ENCODE measurements at regions of chr9 and their contacts with region 1.

Region 1: DNA sequence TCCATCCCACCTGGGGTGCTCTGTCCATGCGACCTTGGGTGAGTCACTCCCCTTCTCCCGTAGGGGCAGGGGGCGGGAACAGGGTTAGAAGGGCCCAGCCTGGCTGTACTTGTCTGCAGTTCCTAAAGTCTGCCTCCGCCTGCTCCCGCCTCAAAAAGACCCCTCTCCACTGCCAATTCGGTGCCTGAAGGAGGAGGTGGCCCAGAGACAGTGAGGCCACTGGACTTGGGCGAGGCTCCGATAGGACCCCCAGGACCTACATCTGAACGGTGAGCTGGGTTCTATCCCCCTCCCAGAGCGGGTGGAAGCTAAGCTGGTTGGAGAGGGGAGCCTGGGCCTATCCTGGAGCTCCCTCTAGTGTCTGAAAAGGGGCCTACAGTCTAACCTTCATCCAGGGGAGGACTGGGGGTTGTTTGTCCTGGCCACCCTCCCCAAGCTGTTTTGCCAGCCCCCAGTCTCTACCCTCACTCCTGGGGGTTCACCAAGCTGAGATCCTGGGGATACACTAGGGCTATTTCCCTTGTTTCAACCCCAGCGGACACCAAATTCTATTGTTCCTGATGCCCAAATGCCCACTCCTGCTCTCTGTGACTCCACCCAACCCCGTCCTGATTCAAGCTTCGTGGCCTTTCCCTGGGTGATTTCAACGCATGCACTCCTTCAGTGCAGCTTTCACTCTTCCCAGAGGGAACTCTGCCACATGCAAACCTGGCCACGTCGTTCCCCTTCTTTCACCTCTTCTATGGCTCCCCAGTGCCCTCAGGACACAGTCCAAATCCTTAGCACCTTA is 6.1 kb upstream of the CRB2 start:
- DNase-seq: no peak
- H3K4me3 ChIP-seq: no peak overlapping the region
- CTCF ChIP-seq: peak; percentile 94

Region 2: GRCh38 chr9:123081824-123082223 is 268.1 kb before region 1 on chr9:
- CTCF ChIA-PET with region 1: interaction called, 288 read pairs
- POLR2A ChIA-PET with region 1: no interaction called
- DNase-seq: no peak
- H3K4me3 ChIP-seq: no peak overlapping the region
- CTCF ChIP-seq: peak; percentile 51

Region 3: GRCh38 chr9:123102375-123103110 is 247.3 kb before region 1 on chr9:
- CTCF ChIA-PET with region 1: interaction called, 107 read pairs
- POLR2A ChIA-PET with region 1: no interaction called
- DNase-seq: peak; percentile 16
- H3K4me3 ChIP-seq: no peak overlapping the region
- CTCF ChIP-seq: peak; percentile 17

Region 4: DNA sequence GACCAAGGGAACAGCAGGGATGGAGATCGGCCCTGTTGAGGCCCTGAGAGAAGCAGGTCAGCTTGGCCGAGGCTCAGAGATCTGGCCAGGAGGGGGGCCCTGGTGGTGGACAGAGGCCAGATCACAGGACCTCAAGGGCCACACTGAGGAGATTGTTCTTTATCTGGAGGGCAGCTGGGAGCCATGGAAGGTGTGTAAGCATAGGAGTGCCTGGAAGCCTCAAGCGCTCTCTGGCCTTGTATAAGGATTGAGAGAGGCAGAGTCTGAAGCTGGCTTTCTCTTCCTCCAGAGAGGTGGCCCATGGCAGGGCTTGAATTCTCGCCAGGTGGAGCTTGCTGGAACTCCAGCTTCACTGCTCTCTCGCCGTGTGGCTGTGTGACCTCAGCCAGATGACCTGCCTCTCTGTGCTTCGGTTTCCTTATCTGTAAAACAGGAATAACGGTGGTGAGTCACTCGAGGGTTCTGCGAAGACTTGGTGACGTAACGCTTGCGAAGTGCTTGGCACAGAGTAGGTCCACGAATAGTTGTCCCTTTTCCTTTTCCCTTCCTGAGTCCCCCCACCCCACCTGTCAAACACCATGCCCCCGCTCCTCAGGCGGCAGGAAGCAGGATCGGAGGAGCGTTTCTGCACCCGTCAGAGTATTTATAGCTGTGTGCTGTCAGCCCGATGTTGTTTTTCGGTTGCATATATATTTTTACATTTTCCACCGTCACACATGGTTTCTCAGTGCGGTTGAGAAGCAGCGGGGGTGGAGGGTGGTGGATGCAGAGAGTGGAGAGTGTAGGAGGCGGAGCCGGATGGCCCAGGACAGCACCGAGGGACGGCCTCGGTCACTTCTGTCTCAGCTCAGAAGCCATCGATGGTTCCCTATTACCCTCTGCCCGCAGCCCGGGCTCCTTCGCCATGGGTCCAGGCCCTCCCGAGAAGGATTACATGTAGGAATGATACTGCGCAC is 10.9 kb before region 1 on chr9:
- CTCF ChIA-PET with region 1: interaction called, 84 read pairs
- POLR2A ChIA-PET with region 1: no interaction called
- DNase-seq: no peak
- H3K4me3 ChIP-seq: no peak overlapping the region
- CTCF ChIP-seq: no peak

Region 5: DNA sequence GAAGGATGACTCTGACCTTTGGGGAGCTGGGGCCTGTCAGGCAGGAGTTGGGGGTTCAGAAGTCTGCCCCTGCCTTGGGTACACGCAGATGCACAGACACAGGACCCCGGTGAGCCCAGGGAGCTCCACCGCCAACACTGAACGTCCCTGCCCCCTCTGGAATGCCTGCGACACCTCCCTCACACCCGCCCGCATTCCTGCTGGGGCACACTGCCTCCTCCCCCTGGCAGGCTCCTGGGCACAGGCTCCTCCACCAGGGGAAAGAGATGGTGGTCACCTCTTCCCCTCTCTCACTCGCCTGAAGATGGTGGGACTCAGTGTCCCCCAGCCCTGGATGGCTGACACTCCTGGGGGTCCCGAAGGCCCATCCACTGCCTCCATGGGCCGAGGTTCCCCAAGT is 18.1 kb after region 1 on chr9:
- CTCF ChIA-PET with region 1: interaction called, 63 read pairs
- POLR2A ChIA-PET with region 1: no interaction called
- DNase-seq: no peak
- H3K4me3 ChIP-seq: no peak overlapping the region
- CTCF ChIP-seq: no peak

Region 6: DNA sequence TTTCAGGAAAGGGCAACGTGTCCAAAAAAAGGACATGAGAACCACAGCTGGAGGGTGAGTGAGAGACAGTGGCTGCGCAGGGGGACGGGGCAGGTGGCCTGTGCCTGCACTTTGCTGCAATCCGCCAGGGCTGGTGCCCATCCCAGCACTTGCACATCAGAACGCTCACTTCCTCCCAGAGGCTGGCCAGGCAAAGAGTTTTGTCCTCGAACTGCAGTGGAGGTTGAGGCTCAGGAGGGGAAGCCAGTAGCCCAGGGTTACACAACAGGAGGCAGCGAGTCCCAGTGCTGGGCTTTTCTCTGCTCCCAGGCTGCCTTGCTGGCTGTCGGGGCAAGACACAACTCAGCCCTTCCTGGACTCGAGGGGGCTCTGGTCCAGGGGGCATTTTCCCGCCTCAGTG is 39.2 kb after region 1 on chr9:
- CTCF ChIA-PET with region 1: interaction called, 217 read pairs
- POLR2A ChIA-PET with region 1: no interaction called
- DNase-seq: no peak
- H3K4me3 ChIP-seq: no peak overlapping the region
- CTCF ChIP-seq: no peak

Measured in AG04449 (cell line).